ENCODE measurements at regions of chr2 and their contacts with region 1.

Region 1: DNA sequence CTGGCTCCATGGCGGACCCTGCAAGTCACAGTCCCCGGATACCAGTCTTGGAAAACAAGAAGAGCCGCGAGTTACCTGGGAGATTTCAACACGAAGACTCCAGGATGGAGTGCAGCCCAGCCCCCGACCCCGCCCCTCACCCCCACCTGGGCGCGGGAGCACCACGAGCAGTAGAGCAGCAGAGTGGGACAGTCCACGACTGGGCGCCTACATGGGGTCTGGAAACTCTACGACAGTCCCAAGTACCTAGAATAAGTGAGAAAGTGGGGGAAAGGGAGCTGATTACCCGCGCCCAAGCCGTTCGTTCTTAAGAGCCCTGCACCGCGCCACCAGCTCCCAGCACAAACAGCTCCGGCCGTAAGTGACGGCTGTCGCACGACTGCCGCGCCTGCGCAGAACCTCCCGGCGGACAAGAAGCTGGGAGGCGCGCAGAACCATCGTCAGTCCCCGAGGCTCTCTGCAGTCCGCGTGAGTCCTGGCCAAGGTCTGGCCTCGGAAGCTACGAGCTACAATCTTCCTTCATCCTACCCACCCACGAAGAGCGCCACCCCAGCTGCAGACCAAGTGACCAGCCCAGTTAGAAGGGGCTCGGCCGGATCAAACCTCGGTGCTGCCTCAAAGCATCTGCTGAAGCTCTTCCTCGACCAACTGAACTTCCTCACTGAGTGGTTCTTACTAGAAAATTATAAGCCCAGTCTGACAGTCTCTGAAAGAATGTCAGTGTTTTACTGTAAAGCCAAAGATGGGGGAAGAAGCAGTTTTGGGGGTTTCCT is at the start of gene DPY30:
- DNase-seq: peak; percentile 70
- ATAC-seq: peak; percentile 97
- H3K4me3 ChIP-seq: peak within 1 kb of the TSS; percentile 79 to 98
- H3K27ac ChIP-seq: peak within 1 kb of the TSS; percentile 95
- H3K4me1 ChIP-seq: peaks cover 5% of the 10 kb centered on the region; the same call in 1 of the 2 replicates
- H3K27me3 ChIP-seq: no peaks in the 10 kb centered on the region
- CTCF ChIP-seq: no peak
- total RNA-seq, gene DPY30: 105 TPM

Region 2: GRCh38 chr2:31886697-31887096 is 152.9 kb before region 1 on chr2:
- CTCF ChIA-PET with region 1: interaction called, 10 read pairs
- POLR2A ChIA-PET with region 1: no interaction called
- in situ Hi-C with region 1: no loop called
- intact Hi-C with region 1: no loop called
- DNase-seq: no peak
- ATAC-seq: no peak
- H3K4me3 ChIP-seq: no peak overlapping the region
- H3K27ac ChIP-seq: no peak overlapping the region
- H3K4me1 ChIP-seq: no peaks in the 10 kb centered on the region
- H3K27me3 ChIP-seq: no peaks in the 10 kb centered on the region
- CTCF ChIP-seq: peak; percentile 50; the same call in 1 of the 2 replicates

Region 3: GRCh38 chr2:32063310-32064161 is 23.9 kb after region 1 on chr2 and contains the start of gene SPAST:
- CTCF ChIA-PET with region 1: interaction called, 11 read pairs
- POLR2A ChIA-PET with region 1: interaction called, 13 read pairs
- in situ Hi-C with region 1: no loop called
- intact Hi-C with region 1: no loop called
- DNase-seq: peak; percentile 90
- ATAC-seq: peak; percentile 99
- H3K4me3 ChIP-seq: peak within 1 kb of the TSS; percentile 76 to 80
- H3K27ac ChIP-seq: peak within 1 kb of the TSS; percentile 88
- H3K4me1 ChIP-seq: no peaks in the 10 kb centered on the region; the same call in 1 of the 2 replicates
- H3K27me3 ChIP-seq: no peaks in the 10 kb centered on the region
- CTCF ChIP-seq: no peak; the same call in 1 of the 2 replicates
- total RNA-seq, gene SPAST: 37.8 TPM

Region 4: DNA sequence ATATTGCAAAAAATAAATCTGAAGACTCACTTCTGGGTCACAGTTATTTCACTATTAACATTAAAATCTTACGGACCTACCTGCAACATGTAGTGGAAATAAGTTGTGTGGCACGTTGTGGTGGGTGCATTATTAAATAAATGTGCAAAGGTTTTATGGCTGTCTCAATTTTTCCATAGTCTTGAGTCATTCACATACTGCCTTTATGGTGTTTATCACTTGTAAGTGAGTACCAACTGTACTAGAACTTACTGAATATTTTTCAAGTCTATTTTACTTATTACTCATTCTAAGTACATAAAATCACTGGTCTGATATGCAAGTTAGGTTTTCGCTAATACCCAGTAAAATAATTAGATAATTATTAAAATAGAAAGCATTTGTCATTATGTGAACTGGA is 78.4 kb after region 1 on chr2:
- CTCF ChIA-PET with region 1: no interaction called
- POLR2A ChIA-PET with region 1: no interaction called
- in situ Hi-C with region 1: no loop called
- intact Hi-C with region 1: no loop called
- DNase-seq: no peak
- ATAC-seq: no peak
- H3K4me3 ChIP-seq: no peak overlapping the region
- H3K27ac ChIP-seq: no peak overlapping the region
- H3K4me1 ChIP-seq: no peaks in the 10 kb centered on the region
- H3K27me3 ChIP-seq: no peaks in the 10 kb centered on the region
- CTCF ChIP-seq: no peak

Region 5: DNA sequence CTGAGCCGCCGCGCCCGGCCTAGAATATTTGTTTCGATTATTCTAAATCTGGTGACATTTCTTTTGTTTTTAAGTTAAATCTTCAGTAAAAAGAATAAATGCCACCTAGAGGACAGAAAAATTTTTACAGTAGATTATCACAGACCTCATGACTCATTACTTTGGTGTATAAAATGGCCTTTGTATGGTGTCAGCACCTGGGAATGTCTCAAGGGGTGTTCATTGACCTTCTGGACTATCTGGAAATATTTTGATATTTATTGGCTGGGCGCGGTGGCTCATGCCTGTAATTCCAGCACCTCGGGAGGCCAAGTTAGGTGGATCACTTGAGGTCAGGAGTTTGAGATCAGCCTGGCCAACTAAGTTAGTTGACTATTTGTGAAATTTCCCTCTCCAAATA is 95.8 kb after region 1 on chr2:
- CTCF ChIA-PET with region 1: no interaction called
- POLR2A ChIA-PET with region 1: no interaction called
- in situ Hi-C with region 1: no loop called
- intact Hi-C with region 1: no loop called
- DNase-seq: peak; percentile 27
- ATAC-seq: peak; percentile 84
- H3K4me3 ChIP-seq: no peak overlapping the region
- H3K27ac ChIP-seq: no peak overlapping the region
- H3K4me1 ChIP-seq: no peaks in the 10 kb centered on the region
- H3K27me3 ChIP-seq: no peaks in the 10 kb centered on the region
- CTCF ChIP-seq: no peak; the same call in 1 of the 2 replicates